T-cell (primary cell): ENCODE measurements at regions of chr15 and their contacts with region 1.

Region 1: GRCh38 chr15:69576035-69576526 is 123.5 kb downstream of the RPLP1 start:
- DNase-seq: peak; percentile 22 to 80 (median 61)
- ATAC-seq: peak; percentile 73 to 87 (median 78)
- H3K4me3 ChIP-seq: no peak overlapping the region
- H3K4me3 Mint-ChIP-seq: no peak overlapping the region
- H3K27ac ChIP-seq: no peak overlapping the region
- H3K27ac Mint-ChIP-seq: peak overlapping the region in 1 of 2 donors; percentile 23
- H3K4me1 ChIP-seq: peaks cover 0 to 31% of the 10 kb centered on the region in 2 experiments
- H3K4me1 Mint-ChIP-seq: peaks cover 21 to 35% (median 34%) of the 10 kb centered on the region in 3 donors
- H3K27me3 ChIP-seq: peaks cover 0 to 4% of the 10 kb centered on the region in 2 experiments
- H3K27me3 Mint-ChIP-seq: no peaks in the 10 kb centered on the region

Region 2: DNA sequence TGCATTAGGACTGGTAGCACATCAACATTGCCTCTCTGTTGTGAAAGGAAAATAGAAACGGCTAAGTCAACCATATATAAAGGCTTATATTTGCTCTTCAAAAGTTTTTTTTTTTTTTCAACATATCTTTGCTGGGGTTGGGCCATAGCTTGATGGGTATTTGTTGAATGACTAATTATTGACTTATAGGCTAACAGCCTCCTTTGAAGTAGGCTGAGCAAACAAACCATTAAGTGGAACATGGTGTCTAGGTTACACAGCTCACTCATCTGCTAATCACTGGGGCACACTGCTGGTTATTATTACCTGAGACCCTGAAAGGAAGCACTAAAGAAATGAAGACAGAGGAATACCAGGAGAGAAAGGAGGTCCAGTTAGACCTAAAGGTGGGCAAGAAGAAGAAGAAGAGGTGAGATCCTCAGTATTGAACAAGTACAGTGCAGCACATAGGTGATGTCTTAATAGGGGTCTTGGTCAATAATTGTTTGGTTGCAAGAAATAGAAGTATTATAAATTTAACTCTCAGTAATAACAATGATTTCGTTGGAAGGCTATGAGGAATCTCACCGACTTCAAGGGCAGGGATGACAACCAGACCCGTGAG is 15.9 kb after region 1 on chr15:
- CTCF ChIA-PET with region 1: no interaction called
- POLR2A ChIA-PET with region 1: interaction called in 1 of 2 experiments, 11 read pairs
- DNase-seq: no peak
- ATAC-seq: no peak
- H3K4me3 ChIP-seq: no peak overlapping the region
- H3K4me3 Mint-ChIP-seq: no peak overlapping the region
- H3K27ac ChIP-seq: no peak overlapping the region
- H3K27ac Mint-ChIP-seq: no peak overlapping the region
- H3K4me1 ChIP-seq: peaks cover 3 to 17% of the 10 kb centered on the region in 2 experiments
- H3K4me1 Mint-ChIP-seq: peaks cover 8 to 17% (median 13%) of the 10 kb centered on the region in 3 donors
- H3K27me3 ChIP-seq: peaks cover 0 to 23% of the 10 kb centered on the region in 2 experiments
- H3K27me3 Mint-ChIP-seq: peaks cover 0 to 5% of the 10 kb centered on the region in 2 donors

Region 3: GRCh38 chr15:70447928-70448698 is 872.0 kb after region 1 on chr15:
- CTCF ChIA-PET with region 1: interaction called in 1 of 2 experiments, 13 read pairs
- POLR2A ChIA-PET with region 1: no interaction called
- DNase-seq: peak in 34 of 35 experiments; percentile 16 to 66 (median 45)
- ATAC-seq: peak; percentile 55 to 72 (median 58)
- H3K4me3 ChIP-seq: peak overlapping the region in 1 of 2 donors; percentile 49
- H3K4me3 Mint-ChIP-seq: peak overlapping the region; percentile 28 to 75 (median 31)
- H3K27ac ChIP-seq: no peak overlapping the region
- H3K27ac Mint-ChIP-seq: peak overlapping the region; percentile 44 to 69
- H3K4me1 ChIP-seq: peaks cover 29 to 41% of the 10 kb centered on the region in 2 experiments
- H3K4me1 Mint-ChIP-seq: peaks cover 42 to 62% (median 45%) of the 10 kb centered on the region in 3 donors
- H3K27me3 ChIP-seq: peaks cover 0 to 29% of the 10 kb centered on the region in 2 experiments
- H3K27me3 Mint-ChIP-seq: peaks cover 2 to 28% of the 10 kb centered on the region in 2 donors